ENCODE measurements at regions of chr6 and their contacts with region 1.

Region 1: GRCh38 chr6:163837691-163838431 is 423.3 kb downstream of the QKI start:
- DNase-seq: peak in 4 of 5 donors; percentile 26 to 62 (median 46)
- ATAC-seq: peak; percentile 66 to 88 (median 82)
- H3K4me3 ChIP-seq: peak overlapping the region in 7 of 12 donors; percentile 4 to 39 (median 19)
- H3K27ac ChIP-seq: peak overlapping the region; percentile 6 to 82 (median 60)
- H3K4me1 ChIP-seq: peaks cover 0 to 25% (median 11%) of the 10 kb centered on the region in 12 donors
- H3K27me3 ChIP-seq: no peaks in the 10 kb centered on the region
- CTCF ChIP-seq: no peak
- POLR2A ChIP-seq: no peak

Region 2: GRCh38 chr6:163745536-163746400 is 92.1 kb before region 1 on chr6:
- intact Hi-C with region 1: loop called in 1 of 10 experiments (anchors 5 kb)
- DNase-seq: peak in 4 of 5 donors; percentile 70 to 89 (median 84)
- ATAC-seq: peak; percentile 94 to 96 (median 95)
- H3K4me3 ChIP-seq: no peak overlapping the region
- H3K27ac ChIP-seq: peak overlapping the region; percentile 32 to 85 (median 78)
- H3K4me1 ChIP-seq: peaks cover 0 to 53% (median 19%) of the 10 kb centered on the region in 12 donors
- H3K27me3 ChIP-seq: no peaks in the 10 kb centered on the region
- CTCF ChIP-seq: no peak
- POLR2A ChIP-seq: no peak